ENCODE measurements at regions of chr19 and their contacts with region 1.

Region 1: DNA sequence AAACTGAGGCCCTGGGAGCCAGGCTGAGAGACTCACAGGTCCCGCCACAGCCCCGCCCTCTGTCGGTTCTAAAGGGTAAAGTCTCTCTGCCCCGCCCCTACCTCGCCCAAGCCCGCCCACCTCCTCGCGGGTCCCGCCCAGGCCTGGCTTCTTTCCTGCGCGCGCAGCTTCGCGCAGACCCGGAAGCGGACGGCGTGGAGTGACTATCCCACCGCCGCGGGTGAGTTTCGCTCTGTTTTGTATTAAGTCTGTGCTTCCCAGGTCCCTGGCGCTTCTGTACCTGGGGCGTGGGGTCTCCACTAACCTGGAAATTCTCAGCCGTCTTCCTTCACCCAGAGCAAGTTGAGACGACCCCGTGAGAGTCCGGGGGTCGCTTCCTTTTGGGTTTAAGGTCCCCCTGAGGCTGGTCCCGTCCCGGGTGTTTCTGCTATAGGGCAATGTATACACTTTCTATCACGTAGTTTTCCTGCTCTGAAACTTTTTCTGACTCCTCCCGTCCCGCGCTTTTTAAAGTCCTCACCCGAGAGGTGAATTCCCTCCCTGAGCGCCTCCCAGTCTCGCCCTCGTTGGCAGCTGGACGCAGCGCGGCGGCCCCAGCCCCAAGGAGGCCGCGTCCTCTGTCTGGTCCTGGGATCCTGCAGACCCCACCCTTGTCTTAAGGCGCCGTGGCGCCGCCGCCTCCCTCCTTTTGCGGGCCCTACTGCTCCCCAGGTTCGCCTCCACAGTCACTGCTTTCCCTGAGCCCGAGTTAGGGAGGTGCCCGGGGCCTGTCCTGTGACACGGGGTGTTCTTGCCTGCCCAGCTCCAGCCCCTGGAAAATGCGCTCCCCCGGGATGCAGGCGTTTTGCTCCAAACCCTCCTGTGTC is at the start of gene ZNF765:
- DNase-seq: peak; percentile 91
- H3K4me3 Mint-ChIP-seq: peak within 1 kb of the TSS; percentile 98
- H3K27ac Mint-ChIP-seq: peak within 1 kb of the TSS; percentile 83
- H3K4me1 Mint-ChIP-seq: peaks cover 19% of the 10 kb centered on the region
- H3K27me3 Mint-ChIP-seq: no peaks in the 10 kb centered on the region
- total RNA-seq, gene ZNF765: 10.5 TPM in 2 replicates

Region 2: GRCh38 chr19:53333463-53334449 is 61.5 kb before region 1 on chr19 and contains the start of gene ZNF845:
- intact Hi-C with region 1: loop called (anchors 2 kb)
- DNase-seq: peak; percentile 95
- H3K4me3 Mint-ChIP-seq: peak within 1 kb of the TSS; percentile 89
- H3K27ac Mint-ChIP-seq: peak within 1 kb of the TSS; percentile 87
- H3K4me1 Mint-ChIP-seq: peaks cover 5% of the 10 kb centered on the region
- H3K27me3 Mint-ChIP-seq: no peaks in the 10 kb centered on the region
- total RNA-seq, gene ZNF845: 5.6 and 5.9 TPM in 2 replicates

Region 3: DNA sequence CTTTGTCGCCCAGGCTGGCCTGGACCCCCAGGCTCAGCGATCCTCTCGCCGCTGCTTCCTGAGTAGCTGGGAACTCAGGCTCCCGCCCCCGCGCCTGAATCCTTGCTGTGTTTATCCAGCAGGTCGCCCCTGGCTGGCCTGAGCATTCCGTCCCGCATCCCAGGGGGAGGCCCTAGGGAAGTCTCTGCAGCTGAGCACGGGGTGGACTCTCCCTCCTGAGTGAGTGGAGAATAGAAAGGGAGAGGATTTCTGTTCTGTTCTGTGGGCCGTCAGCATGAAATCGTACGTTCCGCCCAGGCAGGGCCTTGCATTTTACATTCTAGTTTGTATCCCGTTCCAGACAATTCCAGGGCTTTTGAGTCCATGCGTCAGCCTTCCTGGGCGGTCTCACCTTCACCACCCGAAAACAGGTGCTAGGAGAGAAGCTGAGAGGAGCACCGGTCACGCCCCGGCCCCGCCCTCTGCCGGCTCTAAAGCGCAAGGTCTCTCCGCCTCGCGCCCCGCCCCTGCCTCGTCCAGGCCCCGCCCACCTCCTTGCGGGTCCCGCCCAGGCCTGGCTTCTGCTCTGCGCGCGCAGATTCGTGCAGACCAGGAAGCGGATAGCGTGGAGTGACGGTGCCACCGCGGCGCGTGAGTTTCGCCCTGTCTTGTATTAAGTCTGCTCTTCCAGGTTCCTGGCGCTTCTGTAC is 36.3 kb after region 1 on chr19 and contains the start of gene ZNF761:
- intact Hi-C with region 1: loop called (anchors 5 kb)
- DNase-seq: peak; percentile 96
- H3K4me3 Mint-ChIP-seq: peak within 1 kb of the TSS; percentile 94
- H3K27ac Mint-ChIP-seq: peak within 1 kb of the TSS; percentile 87
- H3K4me1 Mint-ChIP-seq: peaks cover 14% of the 10 kb centered on the region
- H3K27me3 Mint-ChIP-seq: no peaks in the 10 kb centered on the region
- total RNA-seq, gene ZNF761: 12.1 and 12.2 TPM in 2 replicates

Measured in activated T-helper 2 cell treated with anti-CD3 and anti-CD28 coated beads, Interferon-gamma antibody, Interleukin-2, Interleukin-4, amounts not matched to agents 10 μg/mL and 5 μg/mL and 100 μg/mL, durations not matched to agents 14 hours and 24 hours and 36 hours (primary cell).